ENCODE measurements at regions of chr1 and their contacts with region 1.

Region 1: DNA sequence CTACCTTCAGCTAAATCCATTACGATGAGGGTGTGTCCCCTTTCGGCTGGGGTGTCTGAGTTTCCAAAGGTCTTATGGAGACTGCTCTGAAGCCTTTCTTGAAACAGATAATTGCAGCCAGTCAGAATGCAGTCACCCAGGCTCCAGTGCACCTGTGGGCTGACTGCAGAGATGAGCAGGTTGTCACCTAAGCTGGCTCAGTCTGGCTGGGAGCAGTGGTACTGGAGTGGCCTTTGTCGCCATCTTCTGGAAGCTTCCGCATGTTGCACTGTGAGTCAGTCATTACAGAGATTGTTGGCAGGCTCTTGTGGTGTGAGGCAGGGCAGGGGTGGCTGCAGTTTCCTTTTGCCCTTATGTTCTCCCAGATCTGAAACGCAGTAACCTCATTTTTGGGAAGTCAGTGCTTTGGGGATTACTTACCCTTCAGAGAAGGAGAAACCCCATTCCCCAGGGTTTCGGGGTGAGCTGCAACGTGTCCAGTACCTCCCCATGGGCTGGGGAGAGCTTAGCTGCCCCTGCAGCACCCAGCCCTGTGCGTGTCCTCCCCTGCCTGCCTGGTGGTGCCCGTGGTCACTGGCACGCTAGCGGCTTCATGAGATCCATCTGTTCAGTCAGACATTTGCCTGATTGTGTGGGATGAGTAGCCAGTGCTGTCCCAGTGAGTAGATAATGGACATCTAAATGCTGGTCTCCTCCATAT is 48.0 kb downstream of the SMYD2 start:
- DNase-seq: peak; percentile 67
- H3K4me3 ChIP-seq: no peak overlapping the region
- CTCF ChIP-seq: peak; percentile 91

Region 2: DNA sequence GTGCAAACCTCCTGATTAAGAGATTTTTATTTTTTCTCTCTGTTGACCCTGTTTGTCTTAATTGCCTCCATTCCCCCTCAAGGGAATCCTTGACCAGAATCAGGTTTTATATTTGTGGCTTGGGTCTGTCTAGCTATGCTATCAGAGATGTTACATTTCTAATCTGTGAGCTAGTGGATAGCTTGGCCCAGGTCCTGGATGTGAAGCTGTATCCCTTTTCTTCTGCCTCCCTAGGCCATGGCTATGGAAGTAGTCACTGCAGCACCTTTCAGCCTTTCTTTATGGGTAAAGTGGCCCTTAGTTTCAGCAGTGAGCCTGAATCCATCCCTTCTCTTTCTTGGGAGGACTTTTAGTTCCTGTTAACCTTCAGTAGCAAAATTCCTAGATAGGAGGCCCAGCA is 1296.3 kb before region 1 on chr1:
- in situ Hi-C with region 1: no loop called
- DNase-seq: no peak
- H3K4me3 ChIP-seq: no peak overlapping the region
- CTCF ChIP-seq: no peak

Region 3: DNA sequence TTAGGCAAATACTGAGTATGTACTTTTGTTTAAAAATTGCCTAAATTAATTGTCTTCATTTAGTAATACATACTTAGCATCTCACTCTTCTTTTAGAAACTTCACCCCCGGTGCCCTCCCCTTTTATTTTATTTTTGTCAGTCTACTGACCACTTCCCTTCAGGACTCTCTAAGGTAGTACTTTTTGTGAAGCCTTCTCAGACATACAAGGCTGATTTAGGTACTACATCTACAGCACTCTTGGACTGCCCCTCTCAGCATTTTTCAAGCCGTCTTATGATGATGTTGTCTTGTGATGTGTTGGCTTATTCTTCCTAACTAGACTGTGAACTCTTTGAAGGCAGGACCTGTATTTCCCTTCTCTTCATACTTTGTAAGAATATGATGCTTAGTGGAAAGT is 1253.2 kb before region 1 on chr1:
- in situ Hi-C with region 1: loop called (anchors 25 kb)
- DNase-seq: no peak
- H3K4me3 ChIP-seq: no peak overlapping the region
- CTCF ChIP-seq: no peak

Region 4: GRCh38 chr1:214202992-214203391 is 125.9 kb before region 1 on chr1:
- in situ Hi-C with region 1: loop called (anchors 5 kb)
- DNase-seq: no peak
- H3K4me3 ChIP-seq: no peak overlapping the region
- CTCF ChIP-seq: no peak

Region 5: GRCh38 chr1:214261206-214262123 is 67.5 kb before region 1 on chr1:
- in situ Hi-C with region 1: loop called (anchors 5 kb)
- DNase-seq: peak; percentile 51
- H3K4me3 ChIP-seq: no peak overlapping the region
- CTCF ChIP-seq: peak; percentile 98

Region 6: GRCh38 chr1:214584805-214585766 is 256.2 kb after region 1 on chr1:
- in situ Hi-C with region 1: loop called (anchors 25 kb)
- DNase-seq: no peak
- H3K4me3 ChIP-seq: no peak overlapping the region
- CTCF ChIP-seq: peak; percentile 64

Region 7: DNA sequence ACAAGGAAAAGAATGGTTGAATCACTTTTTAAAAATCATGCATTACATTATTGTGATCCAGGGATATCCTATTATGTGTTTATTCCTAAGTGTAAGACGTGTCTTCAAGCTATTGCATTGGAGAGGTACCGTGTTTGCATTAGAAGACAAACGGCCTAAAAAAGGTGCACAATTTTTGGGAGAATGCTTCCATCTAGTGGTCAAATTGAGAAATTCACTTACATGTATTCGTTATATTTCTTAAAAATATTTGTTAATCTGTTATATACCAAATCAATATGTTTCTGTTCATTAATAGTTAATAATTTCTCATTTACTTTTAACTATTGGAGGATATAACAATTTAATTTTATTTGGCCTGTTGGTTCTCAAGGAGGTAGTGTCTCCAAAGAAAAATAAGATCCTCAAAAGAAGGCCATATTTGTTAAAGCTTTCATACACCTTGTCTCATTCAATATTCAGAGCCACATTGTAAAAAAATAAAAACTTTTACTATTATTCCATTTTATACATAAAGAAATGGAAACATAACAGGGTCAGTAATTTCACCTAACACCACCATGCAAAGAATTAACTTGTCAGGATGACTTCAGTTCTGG is 1197.7 kb after region 1 on chr1:
- in situ Hi-C with region 1: loop called (anchors 5 kb)
- DNase-seq: peak; percentile 55
- H3K4me3 ChIP-seq: no peak overlapping the region
- CTCF ChIP-seq: peak; percentile 28

Measured in astrocyte of the cerebellum (primary cell).